Ovary (tissue), 10 donors: ENCODE measurements at regions of chr5 and their contacts with region 1.

Region 1: DNA sequence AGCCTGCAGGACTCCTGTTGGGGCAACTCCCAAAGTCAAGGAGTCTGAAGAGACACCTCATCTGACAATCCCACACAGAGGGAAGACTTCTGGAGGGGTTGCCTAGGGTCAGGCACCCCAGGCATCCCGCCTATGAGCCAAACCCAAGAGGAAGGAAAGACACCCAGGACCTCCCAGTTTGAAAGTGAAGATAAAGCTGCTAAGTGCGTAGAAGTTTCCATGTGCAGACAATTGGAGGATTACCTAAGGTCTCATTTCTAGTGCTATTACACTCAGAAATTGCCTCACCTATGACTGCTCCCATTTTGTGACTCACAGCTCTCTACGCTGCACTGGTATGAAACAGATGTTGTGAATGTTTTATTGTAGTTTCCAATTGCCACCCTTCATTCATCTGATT is 322.9 kb downstream of the SLIT3 start:
- DNase-seq: no peak
- H3K4me3 ChIP-seq: no peak overlapping the region
- H3K27ac ChIP-seq: no peak overlapping the region
- H3K4me1 ChIP-seq: peaks cover 2% of the 10 kb centered on the region
- H3K27me3 ChIP-seq: no peaks in the 10 kb centered on the region
- CTCF ChIP-seq: no peak
- EP300 ChIP-seq: no peak
- POLR2A ChIP-seq: no peak

Region 2: GRCh38 chr5:168698991-168699401 is 279.0 kb before region 1 on chr5:
- intact Hi-C with region 1: loop called in 1 of 4 experiments (anchors 10 kb)
- DNase-seq: peak in 1 of 5 donors; percentile 43
- H3K4me3 ChIP-seq: no peak overlapping the region
- H3K27ac ChIP-seq: no peak overlapping the region
- H3K4me1 ChIP-seq: peaks cover 16% of the 10 kb centered on the region
- H3K27me3 ChIP-seq: no peaks in the 10 kb centered on the region
- CTCF ChIP-seq: no peak
- EP300 ChIP-seq: no peak
- POLR2A ChIP-seq: no peak

Region 3: GRCh38 chr5:168843277-168844015 is 134.6 kb before region 1 on chr5:
- intact Hi-C with region 1: no loop called
- DNase-seq: no peak
- H3K4me3 ChIP-seq: no peak overlapping the region
- H3K27ac ChIP-seq: no peak overlapping the region
- H3K4me1 ChIP-seq: peaks cover 1% of the 10 kb centered on the region
- H3K27me3 ChIP-seq: no peaks in the 10 kb centered on the region
- CTCF ChIP-seq: no peak
- EP300 ChIP-seq: no peak
- POLR2A ChIP-seq: no peak